Sigmoid colon (tissue), 7 donors: ENCODE measurements at regions of chr11 and their contacts with region 1.

Region 1: GRCh38 chr11:14554959-14555358 is 34.8 kb upstream of the PSMA1 start:
- DNase-seq: no peak
- H3K4me3 ChIP-seq: no peak overlapping the region
- H3K27ac ChIP-seq: peak overlapping the region in 3 of 4 donors; percentile 15 to 78 (median 76)
- H3K4me1 ChIP-seq: peaks cover 0 to 49% (median 25%) of the 10 kb centered on the region in 4 donors
- H3K27me3 ChIP-seq: no peaks in the 10 kb centered on the region
- CTCF ChIP-seq: no peak
- EP300 ChIP-seq: peak; percentile 49 to 92 (median 65)
- POLR2A ChIP-seq: no peak

Region 2: GRCh38 chr11:14619603-14620531 is 64.9 kb after region 1 on chr11:
- intact Hi-C with region 1: loop called (anchors 5 kb)
- DNase-seq: peak; percentile 84
- H3K4me3 ChIP-seq: no peak overlapping the region
- H3K27ac ChIP-seq: peak overlapping the region; percentile 33 to 72 (median 52)
- H3K4me1 ChIP-seq: peaks cover 0 to 50% (median 43%) of the 10 kb centered on the region in 4 donors
- H3K27me3 ChIP-seq: no peaks in the 10 kb centered on the region
- CTCF ChIP-seq: no peak
- EP300 ChIP-seq: no peak
- POLR2A ChIP-seq: no peak

Region 3: GRCh38 chr11:14746857-14747395 is 192.0 kb after region 1 on chr11:
- intact Hi-C with region 1: loop called (anchors 10 kb)
- DNase-seq: no peak
- H3K4me3 ChIP-seq: no peak overlapping the region
- H3K27ac ChIP-seq: peak overlapping the region in 3 of 4 donors; percentile 41 to 73 (median 59)
- H3K4me1 ChIP-seq: peaks cover 0 to 73% (median 46%) of the 10 kb centered on the region in 4 donors
- H3K27me3 ChIP-seq: no peaks in the 10 kb centered on the region
- CTCF ChIP-seq: no peak
- EP300 ChIP-seq: no peak
- POLR2A ChIP-seq: no peak

Region 4: GRCh38 chr11:15379483-15379882 is 824.5 kb after region 1 on chr11:
- intact Hi-C with region 1: no loop called
- DNase-seq: no peak
- H3K4me3 ChIP-seq: no peak overlapping the region
- H3K27ac ChIP-seq: no peak overlapping the region
- H3K4me1 ChIP-seq: no peaks in the 10 kb centered on the region
- H3K27me3 ChIP-seq: no peaks in the 10 kb centered on the region
- CTCF ChIP-seq: no peak
- EP300 ChIP-seq: no peak
- POLR2A ChIP-seq: no peak